ENCODE measurements at regions of chr3 and their contacts with region 1.

Region 1: DNA sequence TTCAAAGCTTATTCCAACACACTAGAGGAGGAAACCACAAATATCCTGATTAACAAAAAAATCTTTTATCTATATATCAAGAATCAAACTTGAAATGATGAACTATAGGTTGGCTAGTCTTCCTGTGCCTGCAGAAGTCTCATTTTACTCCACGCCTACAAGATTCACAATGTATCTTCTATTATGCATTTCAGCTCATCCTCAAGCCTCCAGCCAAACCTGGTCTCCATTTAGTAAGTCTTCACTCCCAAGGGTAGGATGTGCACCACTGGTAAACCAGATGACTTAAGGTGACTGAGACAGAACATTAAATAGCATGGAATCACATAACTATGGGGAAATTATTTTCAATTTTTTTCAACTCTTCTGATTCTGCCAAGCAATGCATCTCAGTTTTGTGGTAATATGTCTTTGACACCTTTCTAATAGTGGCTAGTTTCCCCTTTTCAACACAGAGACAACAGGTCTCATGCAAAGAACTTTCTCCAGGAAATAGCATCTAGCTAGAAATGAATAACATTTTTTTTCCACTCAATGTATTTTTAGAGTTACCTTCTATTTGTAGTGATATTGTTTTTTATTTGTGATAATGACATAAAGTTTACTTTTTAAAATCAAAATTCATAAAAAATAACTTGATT is 166.9 kb downstream of the TNIK start:
- DNase-seq: no peak
- H3K4me3 Mint-ChIP-seq: no peak overlapping the region
- H3K27ac Mint-ChIP-seq: peak overlapping the region; percentile 59
- H3K4me1 Mint-ChIP-seq: peaks cover 53% of the 10 kb centered on the region
- H3K27me3 Mint-ChIP-seq: no peaks in the 10 kb centered on the region

Region 2: GRCh38 chr3:171162986-171163723 is 130.1 kb before region 1 on chr3:
- intact Hi-C with region 1: loop called (anchors 5 kb)
- DNase-seq: no peak
- H3K4me3 Mint-ChIP-seq: no peak overlapping the region
- H3K27ac Mint-ChIP-seq: no peak overlapping the region
- H3K4me1 Mint-ChIP-seq: peaks cover 18% of the 10 kb centered on the region
- H3K27me3 Mint-ChIP-seq: no peaks in the 10 kb centered on the region

Region 3: DNA sequence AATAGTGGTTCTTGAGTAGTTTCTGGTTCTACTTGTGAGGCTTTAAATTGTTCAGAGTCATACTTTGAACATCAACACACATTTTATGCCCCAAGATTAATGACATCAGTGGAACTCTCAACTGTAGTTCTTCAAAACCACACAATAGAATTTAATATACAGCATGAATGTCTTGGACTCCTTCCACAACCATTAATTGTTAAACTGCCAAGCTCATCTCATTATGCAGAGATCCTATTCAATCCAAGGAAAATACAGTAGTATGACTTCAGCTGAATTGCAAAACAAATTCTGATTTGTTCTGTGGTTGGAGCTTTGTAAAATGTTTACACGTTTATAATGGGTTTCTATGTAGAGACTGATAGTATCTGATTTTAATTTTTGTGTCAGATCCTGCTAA is 67.6 kb before region 1 on chr3:
- intact Hi-C with region 1: no loop called
- DNase-seq: no peak
- H3K4me3 Mint-ChIP-seq: no peak overlapping the region
- H3K27ac Mint-ChIP-seq: peak overlapping the region; percentile 69
- H3K4me1 Mint-ChIP-seq: peaks cover 56% of the 10 kb centered on the region
- H3K27me3 Mint-ChIP-seq: no peaks in the 10 kb centered on the region

Region 4: GRCh38 chr3:171343693-171344092 is 50.4 kb after region 1 on chr3:
- intact Hi-C with region 1: loop called (anchors 5 kb)
- DNase-seq: no peak
- H3K4me3 Mint-ChIP-seq: no peak overlapping the region
- H3K27ac Mint-ChIP-seq: no peak overlapping the region
- H3K4me1 Mint-ChIP-seq: peaks cover 25% of the 10 kb centered on the region
- H3K27me3 Mint-ChIP-seq: no peaks in the 10 kb centered on the region

Measured in activated T-helper 2 cell treated with anti-CD3 and anti-CD28 coated beads, Interferon-gamma antibody, Interleukin-2, Interleukin-4, amounts not matched to agents 10 μg/mL and 5 μg/mL and 100 μg/mL, durations not matched to agents 14 hours and 24 hours and 36 hours (primary cell).